ENCODE measurements at regions of chr3 and their contacts with region 1.

Region 1: DNA sequence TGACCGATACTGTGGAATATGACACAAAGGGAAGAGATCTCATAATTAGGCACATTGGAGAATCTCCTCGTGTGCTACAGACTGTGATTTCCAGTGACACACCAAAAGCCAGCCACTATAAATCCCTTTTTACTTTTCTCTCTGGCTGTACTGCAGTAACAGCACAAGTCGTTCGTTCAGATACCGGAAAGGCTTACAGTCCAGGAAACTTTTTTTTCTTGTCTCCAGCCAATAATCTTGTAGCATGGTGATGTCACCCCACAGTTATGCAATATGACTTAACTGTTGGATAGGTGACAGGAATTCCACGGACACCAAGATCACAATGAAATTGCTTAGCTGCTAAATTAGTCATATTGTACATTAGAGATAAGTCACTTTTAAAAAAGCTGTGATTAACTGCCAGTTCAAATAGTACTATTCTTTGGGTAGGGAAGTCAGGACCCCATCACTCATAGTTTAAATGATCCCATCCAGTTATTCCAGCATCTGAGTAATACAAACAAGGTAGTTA is 36.3 kb upstream of the TSC22D2 start:
- DNase-seq: peak; percentile 100
- H3K4me3 ChIP-seq: peak overlapping the region; percentile 7 to 91 (median 19)
- H3K27ac ChIP-seq: peak overlapping the region; percentile 94
- H3K4me1 ChIP-seq: peaks cover 39% of the 10 kb centered on the region
- H3K27me3 ChIP-seq: no peaks in the 10 kb centered on the region
- CTCF ChIP-seq: no peak
- POLR2A ChIP-seq: peak; percentile 86

Region 2: GRCh38 chr3:150227839-150228238 is 144.0 kb before region 1 on chr3:
- CTCF ChIA-PET with region 1: interaction called, 4 read pairs
- POLR2A ChIA-PET with region 1: no interaction called
- dilution Hi-C with region 1: no loop called
- intact Hi-C with region 1: loop called (anchors 1 kb)
- DNase-seq: peak; percentile 72
- H3K4me3 ChIP-seq: no peak overlapping the region
- H3K27ac ChIP-seq: no peak overlapping the region
- H3K4me1 ChIP-seq: peaks cover 27% of the 10 kb centered on the region
- H3K27me3 ChIP-seq: peaks cover 25 to 26% of the 10 kb centered on the region in 2 experiments
- CTCF ChIP-seq: peak; percentile 82 to 84
- POLR2A ChIP-seq: no peak

Region 3: GRCh38 chr3:150253622-150254021 is 118.2 kb before region 1 on chr3:
- CTCF ChIA-PET with region 1: no interaction called
- POLR2A ChIA-PET with region 1: no interaction called
- dilution Hi-C with region 1: no loop called
- intact Hi-C with region 1: loop called (anchors 1 kb)
- DNase-seq: peak; percentile 57
- H3K4me3 ChIP-seq: no peak overlapping the region
- H3K27ac ChIP-seq: no peak overlapping the region
- H3K4me1 ChIP-seq: peaks cover 32% of the 10 kb centered on the region
- H3K27me3 ChIP-seq: no peaks in the 10 kb centered on the region
- CTCF ChIP-seq: no peak
- POLR2A ChIP-seq: no peak

Region 4: DNA sequence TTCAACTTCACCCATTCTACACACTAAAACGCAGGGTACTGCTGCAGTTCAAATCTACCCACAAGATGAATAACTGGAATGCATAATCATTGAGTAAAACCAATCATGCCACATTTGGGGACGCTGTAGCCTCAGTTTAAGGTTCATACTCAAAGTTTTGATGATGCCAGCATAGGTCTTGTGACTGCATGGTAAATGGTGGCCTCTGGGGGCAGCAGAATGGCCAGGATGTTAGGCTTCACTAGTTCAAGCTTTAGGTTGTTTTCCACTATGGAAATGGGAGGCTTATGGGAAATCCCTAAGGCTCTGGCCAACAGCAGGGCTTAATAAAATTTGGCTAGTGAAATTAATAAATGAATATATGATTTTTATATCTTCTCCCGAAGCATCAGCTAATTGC is 68.0 kb before region 1 on chr3:
- CTCF ChIA-PET with region 1: no interaction called
- POLR2A ChIA-PET with region 1: no interaction called
- dilution Hi-C with region 1: no loop called
- intact Hi-C with region 1: loop called (anchors 1 kb)
- DNase-seq: no peak
- H3K4me3 ChIP-seq: no peak overlapping the region
- H3K27ac ChIP-seq: no peak overlapping the region
- H3K4me1 ChIP-seq: peaks cover 39% of the 10 kb centered on the region
- H3K27me3 ChIP-seq: no peaks in the 10 kb centered on the region
- CTCF ChIP-seq: peak; percentile 17 to 18
- POLR2A ChIP-seq: no peak

Region 5: DNA sequence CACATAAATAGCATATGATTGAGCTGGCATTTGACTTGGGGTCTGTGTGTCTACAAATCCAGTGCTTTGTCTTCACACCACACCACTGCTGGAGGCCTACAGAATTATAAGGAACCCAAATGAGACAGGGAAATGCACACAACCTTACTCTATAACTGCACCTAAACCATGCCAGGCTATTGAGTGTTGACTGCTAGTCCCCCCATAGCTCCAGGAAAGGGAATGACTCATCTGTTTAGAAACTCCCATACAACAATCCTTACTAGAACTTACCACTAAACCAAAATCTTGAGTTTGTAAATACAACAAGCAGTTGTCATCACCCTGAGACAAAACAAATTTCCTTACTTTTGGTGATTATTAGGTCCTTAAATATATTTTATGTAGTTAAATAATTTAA is 19.4 kb after region 1 on chr3:
- CTCF ChIA-PET with region 1: interaction called, 4 read pairs
- POLR2A ChIA-PET with region 1: interaction called, 4 read pairs
- dilution Hi-C with region 1: no loop called
- intact Hi-C with region 1: loop called (anchors 2 kb)
- DNase-seq: peak; percentile 55
- H3K4me3 ChIP-seq: no peak overlapping the region
- H3K27ac ChIP-seq: no peak overlapping the region
- H3K4me1 ChIP-seq: peaks cover 26% of the 10 kb centered on the region
- H3K27me3 ChIP-seq: no peaks in the 10 kb centered on the region
- CTCF ChIP-seq: no peak
- POLR2A ChIP-seq: no peak

Region 6: DNA sequence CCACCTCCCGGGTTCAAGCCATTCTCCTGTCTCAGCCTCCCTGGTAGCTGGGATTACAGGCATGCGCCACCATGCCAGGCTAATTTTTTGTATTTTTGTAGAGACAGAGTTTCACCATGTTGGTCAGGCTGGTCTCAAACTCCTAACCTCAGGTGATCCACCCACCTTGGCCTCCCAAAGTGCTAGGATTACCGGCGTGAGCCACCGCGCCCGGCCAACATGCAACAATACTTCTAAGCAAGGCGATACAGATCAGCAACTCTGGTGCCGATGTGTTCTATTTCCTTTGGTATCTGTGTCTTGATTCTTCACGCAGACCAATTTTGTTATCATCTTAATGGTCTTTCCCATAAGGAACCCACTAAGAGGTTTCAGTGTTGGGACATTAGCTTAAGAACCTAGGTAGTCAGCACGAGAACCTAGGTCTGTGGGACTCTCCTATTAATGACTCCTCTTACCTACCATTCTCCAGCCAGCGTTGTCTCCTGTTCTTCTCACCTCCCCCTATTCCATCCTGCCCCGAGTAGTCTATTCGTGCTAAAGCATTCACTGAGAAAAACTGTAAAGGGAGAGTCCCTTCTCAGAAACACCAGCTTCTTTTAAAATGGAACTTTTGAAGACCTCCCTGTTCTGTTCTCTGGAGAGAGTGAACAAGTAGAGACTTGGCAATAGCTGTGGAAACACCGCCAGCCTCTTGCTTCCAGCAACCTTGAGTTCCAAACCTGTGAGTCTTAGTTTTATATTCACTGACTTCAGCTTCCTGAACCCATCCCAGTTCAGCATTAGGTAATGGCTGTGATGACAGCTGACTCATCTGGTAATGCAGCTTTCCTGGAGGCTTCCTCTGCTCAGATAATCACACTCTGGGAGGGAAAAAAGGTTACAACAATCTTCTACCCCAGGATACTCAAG is 97.5 kb after region 1 on chr3:
- CTCF ChIA-PET with region 1: no interaction called
- POLR2A ChIA-PET with region 1: no interaction called
- dilution Hi-C with region 1: no loop called
- intact Hi-C with region 1: loop called (anchors 1 kb)
- DNase-seq: peak; percentile 88
- H3K4me3 ChIP-seq: peak overlapping the region in 1 of 3 experiments; percentile 15
- H3K27ac ChIP-seq: peak overlapping the region; percentile 83
- H3K4me1 ChIP-seq: peaks cover 28% of the 10 kb centered on the region
- H3K27me3 ChIP-seq: no peaks in the 10 kb centered on the region
- CTCF ChIP-seq: no peak
- POLR2A ChIP-seq: no peak

Region 7: DNA sequence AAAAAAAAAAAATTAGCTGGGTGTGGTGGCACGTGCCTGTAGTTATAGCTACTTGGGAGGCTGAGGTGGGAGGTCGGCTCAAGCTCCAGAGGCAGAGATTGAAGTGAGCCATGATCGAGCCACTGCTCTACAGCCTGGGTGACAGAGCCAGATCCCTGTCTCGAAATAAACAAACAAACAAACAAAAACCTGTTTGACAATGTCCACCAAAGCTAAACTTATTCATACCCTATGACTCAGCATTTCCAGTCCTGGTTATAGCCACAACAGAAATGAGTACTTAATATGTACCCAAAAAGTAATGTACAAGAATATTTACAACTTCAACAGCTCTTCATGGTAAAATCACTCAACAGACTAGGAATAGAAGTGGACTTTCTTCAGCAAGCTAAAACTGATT is 143.4 kb after region 1 on chr3:
- CTCF ChIA-PET with region 1: no interaction called
- POLR2A ChIA-PET with region 1: no interaction called
- dilution Hi-C with region 1: no loop called
- intact Hi-C with region 1: no loop called
- DNase-seq: no peak
- H3K4me3 ChIP-seq: no peak overlapping the region
- H3K27ac ChIP-seq: no peak overlapping the region
- H3K4me1 ChIP-seq: no peaks in the 10 kb centered on the region
- H3K27me3 ChIP-seq: no peaks in the 10 kb centered on the region
- CTCF ChIP-seq: no peak
- POLR2A ChIP-seq: no peak